ENCODE measurements at regions of chr1 and their contacts with region 1.

Region 1: DNA sequence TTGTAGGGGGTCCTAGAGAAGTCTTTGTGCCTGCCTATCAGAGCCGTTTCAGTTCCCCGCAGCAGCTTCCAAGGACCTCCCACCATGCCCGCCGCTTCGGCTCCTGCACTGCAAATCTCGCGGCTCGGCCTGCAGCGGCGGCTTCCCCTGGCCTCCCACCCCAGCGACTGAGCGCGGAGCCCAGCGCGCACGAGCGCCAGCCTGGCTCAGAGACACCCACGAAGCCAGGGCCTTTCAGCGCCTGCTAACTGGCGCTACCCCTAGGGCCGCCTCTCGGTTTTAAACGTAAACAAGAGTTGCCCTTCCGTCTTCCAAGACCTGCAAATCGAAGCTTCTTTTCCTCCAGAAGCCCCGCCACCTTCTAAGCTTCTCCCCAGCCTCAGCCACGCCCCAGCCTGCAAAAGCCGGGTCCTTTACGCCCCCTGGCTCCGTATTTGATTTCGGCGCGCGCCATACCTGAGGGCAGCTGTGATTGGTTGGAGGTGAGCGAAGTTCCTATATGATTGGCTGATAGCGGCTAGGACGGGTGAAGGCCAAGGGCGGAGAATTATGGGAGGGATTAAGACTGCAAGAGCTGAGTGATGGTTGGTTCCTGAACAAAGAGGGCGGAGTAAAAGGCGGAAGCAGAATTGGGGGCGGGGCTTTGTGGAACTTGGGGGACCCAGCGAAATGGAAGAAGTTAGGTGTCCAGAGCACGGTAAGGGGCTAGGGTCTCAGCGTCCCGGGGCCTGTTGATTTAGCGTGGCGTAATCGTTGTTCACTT is at the start of gene TTF2:
- DNase-seq: peak; percentile 98
- H3K4me3 Mint-ChIP-seq: no peak within 1 kb of the TSS
- H3K27ac Mint-ChIP-seq: no peak within 1 kb of the TSS
- H3K4me1 Mint-ChIP-seq: peaks cover 40% of the 10 kb centered on the region
- H3K27me3 Mint-ChIP-seq: no peaks in the 10 kb centered on the region
- total RNA-seq, gene TTF2: 102 to 104 TPM

Region 2: GRCh38 chr1:116570358-116571200 is 489.3 kb before region 1 on chr1 and contains the start of gene CD58:
- CTCF ChIA-PET with region 1: interaction called, 20 read pairs
- POLR2A ChIA-PET with region 1: interaction called, 5 read pairs
- intact Hi-C with region 1: loop called (anchors 1 kb)
- DNase-seq: peak; percentile 92
- H3K4me3 Mint-ChIP-seq: peak within 1 kb of the TSS; percentile 99
- H3K27ac Mint-ChIP-seq: peak within 1 kb of the TSS; percentile 93
- H3K4me1 Mint-ChIP-seq: peaks cover 72% of the 10 kb centered on the region
- H3K27me3 Mint-ChIP-seq: no peaks in the 10 kb centered on the region
- total RNA-seq, gene CD58: 21.9 to 27.2 TPM

Region 3: DNA sequence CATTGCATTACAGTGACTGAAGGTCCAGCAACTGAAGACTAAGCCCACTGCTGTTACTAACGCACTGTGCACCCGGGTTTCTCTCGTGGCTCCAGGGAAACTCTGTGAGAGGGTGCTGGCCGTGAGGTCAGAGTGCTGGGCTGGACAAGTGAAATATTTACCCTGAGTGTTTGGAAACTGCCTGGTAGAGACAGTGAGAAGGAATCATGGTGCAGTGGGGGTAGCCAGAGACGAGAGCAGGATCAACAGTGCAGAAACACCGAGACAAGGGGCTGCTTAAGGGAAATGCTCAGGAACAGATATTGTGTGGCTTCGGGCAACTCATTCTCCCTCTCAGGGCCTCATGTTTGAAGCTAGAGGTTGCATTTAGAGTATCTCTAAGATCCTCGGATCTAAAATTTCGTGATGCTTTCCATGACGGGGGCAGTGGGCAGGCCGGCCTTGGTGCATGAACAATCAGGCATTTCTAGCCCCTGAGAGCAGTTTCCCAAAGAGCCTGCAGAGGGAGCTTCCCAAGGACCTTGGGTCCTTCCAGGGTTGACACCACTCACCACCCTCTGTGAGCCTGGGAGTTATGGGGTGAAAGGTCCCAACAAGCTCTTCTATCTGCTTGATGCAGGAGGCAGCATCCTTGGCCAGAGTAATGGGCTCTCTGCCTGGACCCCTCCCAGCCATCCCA is 295.9 kb before region 1 on chr1:
- CTCF ChIA-PET with region 1: interaction called, 11 read pairs
- POLR2A ChIA-PET with region 1: interaction called, 94 read pairs
- intact Hi-C with region 1: loop called (anchors 2 kb)
- DNase-seq: peak; percentile 79
- H3K4me3 Mint-ChIP-seq: peak overlapping the region; percentile 99
- H3K27ac Mint-ChIP-seq: peak overlapping the region; percentile 99
- H3K4me1 Mint-ChIP-seq: peaks cover 88% of the 10 kb centered on the region
- H3K27me3 Mint-ChIP-seq: peaks cover 3% of the 10 kb centered on the region

Region 4: DNA sequence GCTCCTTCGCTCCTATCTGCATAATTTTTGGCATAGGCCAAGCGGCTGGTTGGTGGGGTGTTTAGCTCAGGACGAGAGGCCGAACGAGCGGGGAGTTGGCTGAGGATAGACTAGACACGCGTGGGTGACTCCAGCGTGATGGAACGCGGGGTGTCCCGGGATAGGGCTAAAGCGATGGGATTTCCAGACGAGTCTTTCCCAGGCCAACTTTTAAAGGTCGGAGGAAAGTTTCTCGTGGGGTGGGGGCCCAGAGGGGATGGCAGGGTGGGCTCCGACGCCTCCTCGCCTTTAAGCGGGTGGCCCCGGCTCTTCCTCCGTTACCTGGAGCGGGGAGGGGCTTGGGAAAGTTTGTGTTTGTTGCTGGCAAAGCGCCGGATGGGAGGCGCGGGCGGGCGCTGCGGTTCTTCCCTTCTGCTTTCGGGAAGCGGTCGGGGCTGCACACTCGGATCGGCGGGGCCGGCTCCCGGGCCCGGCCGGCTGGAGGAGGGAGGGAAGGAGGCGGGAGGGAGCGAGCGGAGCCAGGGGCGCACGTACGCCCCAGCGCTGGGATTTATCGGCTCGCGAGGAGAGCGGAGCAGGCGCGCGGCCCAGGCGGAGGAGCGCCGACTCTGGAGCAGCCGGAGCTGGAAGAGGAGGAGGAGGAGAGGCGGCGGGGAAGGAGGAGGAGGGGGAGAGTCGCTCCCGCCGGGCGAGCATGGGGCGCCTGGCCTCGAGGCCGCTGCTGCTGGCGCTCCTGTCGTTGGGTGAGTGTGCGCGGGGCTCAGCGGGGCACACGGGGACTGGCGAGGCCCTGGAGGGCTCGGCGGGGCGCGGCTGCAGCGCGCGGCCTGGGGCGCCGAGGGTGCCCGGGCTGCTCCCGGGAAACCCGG is 150.1 kb before region 1 on chr1 and contains the start of gene PTGFRN:
- CTCF ChIA-PET with region 1: no interaction called
- POLR2A ChIA-PET with region 1: no interaction called
- intact Hi-C with region 1: loop called (anchors 2 kb)
- DNase-seq: peak; percentile 36
- H3K4me3 Mint-ChIP-seq: peak within 1 kb of the TSS; percentile 69
- H3K27ac Mint-ChIP-seq: no peak within 1 kb of the TSS
- H3K4me1 Mint-ChIP-seq: peaks cover 3% of the 10 kb centered on the region
- H3K27me3 Mint-ChIP-seq: no peaks in the 10 kb centered on the region
- total RNA-seq, gene PTGFRN: 13.5 to 14.2 TPM

Region 5: DNA sequence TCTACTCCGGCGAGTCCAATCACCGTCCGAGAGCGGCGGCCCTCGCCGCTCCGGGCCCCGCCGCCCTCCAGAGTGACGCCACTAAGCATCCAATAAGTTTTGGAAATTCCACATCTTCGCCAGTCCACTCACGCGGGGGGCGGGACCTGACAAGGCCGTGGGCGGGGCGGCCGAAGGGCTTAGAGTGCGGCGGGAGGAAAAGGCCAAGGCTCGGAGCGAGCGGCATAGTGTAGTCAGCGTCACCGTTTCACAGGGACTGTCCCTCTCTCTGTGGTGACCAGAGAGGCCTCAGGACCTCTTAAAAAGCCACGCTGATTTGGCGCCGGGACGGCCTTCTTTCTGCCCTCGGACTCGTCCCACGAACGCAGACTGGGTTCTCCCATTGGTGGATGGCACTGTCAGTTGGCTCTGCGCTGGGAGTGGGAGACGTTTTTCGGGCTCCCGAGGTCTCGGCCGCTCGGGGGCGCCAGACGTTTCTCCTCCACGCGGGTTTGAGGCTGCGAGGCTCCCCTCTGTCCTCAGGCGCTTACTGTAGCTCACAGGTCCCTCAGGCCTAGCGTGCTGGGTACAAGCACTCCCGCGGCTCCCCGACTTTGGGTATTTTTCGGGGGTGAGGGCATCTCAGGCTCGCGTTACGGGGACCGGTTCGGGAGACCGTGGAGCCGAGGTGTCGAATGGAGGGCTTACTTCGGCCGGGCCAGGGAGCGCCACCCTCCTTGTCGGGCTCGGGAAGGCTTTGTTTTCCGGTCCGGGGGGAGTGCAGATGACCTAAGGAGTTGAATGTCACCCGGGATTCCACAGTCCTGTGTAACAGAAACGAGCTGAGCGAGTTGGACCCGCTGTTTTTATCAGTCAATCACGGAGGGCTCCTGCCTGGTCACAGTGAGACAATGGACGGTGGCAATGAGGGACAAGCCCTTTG is 62.2 kb after region 1 on chr1:
- CTCF ChIA-PET with region 1: interaction called, 150 read pairs
- POLR2A ChIA-PET with region 1: interaction called, 3 read pairs
- intact Hi-C with region 1: loop called (anchors 2 kb)
- DNase-seq: peak; percentile 91
- H3K4me3 Mint-ChIP-seq: peak overlapping the region; percentile 72
- H3K27ac Mint-ChIP-seq: no peak overlapping the region
- H3K4me1 Mint-ChIP-seq: peaks cover 8% of the 10 kb centered on the region
- H3K27me3 Mint-ChIP-seq: peaks cover 8% of the 10 kb centered on the region

Region 6: GRCh38 chr1:117605774-117606648 is 546.2 kb after region 1 on chr1 and contains the start of gene TENT5C:
- CTCF ChIA-PET with region 1: no interaction called
- POLR2A ChIA-PET with region 1: no interaction called
- intact Hi-C with region 1: loop called (anchors 1 kb)
- DNase-seq: peak; percentile 99
- H3K4me3 Mint-ChIP-seq: peak within 1 kb of the TSS; percentile 91
- H3K27ac Mint-ChIP-seq: peak within 1 kb of the TSS; percentile 94
- H3K4me1 Mint-ChIP-seq: peaks cover 41% of the 10 kb centered on the region
- H3K27me3 Mint-ChIP-seq: no peaks in the 10 kb centered on the region
- total RNA-seq, gene TENT5C: 13.8 to 14.0 TPM

Measured in activated CD4-positive, alpha-beta memory T cell treated with anti-CD3 and anti-CD28 coated beads for 36 hours (primary cell).